Cardiac septum (tissue), 1 donor: ENCODE measurements at regions of chr4 and their contacts with region 1.

Region 1: DNA sequence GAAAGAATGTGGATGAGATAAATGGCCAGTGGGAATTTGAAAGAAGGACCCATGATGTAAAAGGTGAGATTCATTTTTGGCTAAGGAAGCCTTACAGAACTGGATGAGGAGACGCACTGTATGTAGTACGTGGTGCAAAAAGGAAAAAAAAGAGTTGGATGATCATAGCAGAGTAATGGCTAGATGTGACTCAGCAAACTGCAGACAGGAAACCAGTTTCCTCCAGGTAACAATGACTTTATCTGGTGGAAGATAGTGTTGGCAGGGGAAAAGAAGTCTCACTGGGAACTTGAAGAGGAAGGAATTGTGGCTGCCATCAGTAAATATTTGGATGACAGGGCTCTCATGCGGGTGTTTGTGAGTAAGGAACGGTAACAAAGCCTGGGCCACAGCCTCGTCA is 243.2 kb downstream of the CPE start:
- DNase-seq: no peak

Region 2: DNA sequence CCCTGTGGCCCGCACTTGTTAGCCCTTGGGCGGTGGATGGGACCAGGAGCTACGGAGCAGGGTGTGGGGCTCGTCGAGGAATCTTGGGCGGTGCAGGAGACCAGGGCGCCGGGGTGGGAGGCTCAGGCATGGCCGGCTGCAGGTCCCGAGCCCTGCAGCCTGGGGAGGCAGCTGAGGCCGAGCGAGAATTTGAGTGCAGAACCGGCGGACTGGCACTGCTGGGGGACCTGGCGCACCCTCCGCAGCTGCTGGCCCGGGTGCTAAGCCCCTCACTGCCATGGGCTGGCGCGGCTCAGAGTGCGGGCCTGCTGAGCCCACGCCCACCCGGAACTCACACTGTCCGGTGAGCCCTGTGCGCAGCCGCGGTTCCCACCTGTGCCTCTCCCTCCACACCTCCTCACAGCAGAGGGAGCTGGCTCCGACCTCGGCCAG is 177.4 kb after region 1 on chr4:
- intact Hi-C with region 1: no loop called
- DNase-seq: no peak

Region 3: DNA sequence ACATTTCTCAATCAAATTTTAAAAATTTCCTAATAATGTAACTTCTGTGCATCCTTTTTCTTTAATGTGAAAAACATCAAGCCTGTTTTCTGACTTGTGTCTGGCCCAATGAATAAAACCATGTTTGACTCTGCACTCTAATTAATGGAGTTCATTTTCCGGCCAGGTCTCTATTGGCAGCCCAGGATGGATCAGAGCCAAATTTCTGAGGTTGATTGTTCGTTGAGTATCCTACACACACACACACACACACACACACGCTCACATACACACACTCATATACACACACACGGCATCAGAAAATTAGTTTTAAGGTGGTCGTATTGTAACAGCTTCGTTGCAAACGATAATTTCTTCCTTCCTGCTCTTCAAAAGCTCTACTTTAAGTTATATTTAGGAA is 222.2 kb after region 1 on chr4:
- intact Hi-C with region 1: loop called (anchors 10 kb)
- DNase-seq: no peak